Dorsolateral prefrontal cortex (tissue), 120 donors: ENCODE measurements at regions of chr3 and their contacts with region 1.

Region 1: DNA sequence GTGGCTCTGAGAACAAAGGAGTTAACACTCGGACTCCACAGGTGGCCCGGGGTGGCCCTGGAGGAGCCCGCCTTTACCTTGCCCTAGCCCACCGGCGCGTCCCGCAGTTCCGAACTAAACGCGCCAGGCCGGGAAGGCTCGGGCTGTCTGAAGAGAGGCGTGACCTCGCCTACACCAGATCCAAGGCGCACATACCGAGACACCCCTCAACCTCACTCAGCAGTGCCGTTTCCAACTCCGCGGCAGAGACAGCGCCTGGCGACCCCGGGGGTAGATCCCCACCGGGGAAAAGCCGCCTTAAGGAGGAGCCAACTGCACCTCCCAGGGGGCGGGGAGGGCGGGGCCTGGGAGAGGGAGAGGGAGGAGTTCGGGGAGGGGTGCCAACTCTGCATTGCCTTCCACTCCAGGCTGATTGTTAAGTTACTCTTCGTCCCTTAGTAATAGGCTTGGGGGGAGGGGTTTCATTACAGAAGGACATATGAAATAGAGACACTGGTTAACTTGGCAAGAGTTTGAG is at the start of gene DLG1:
- DNase-seq: peak in 9 of 10 donors; percentile 38 to 74 (median 60)
- H3K4me3 ChIP-seq: peak within 1 kb of the TSS; percentile 65 to 98 (median 93)
- H3K27ac ChIP-seq: peak within 1 kb of the TSS; percentile 65 to 99 (median 95)
- H3K27me3 ChIP-seq: no peaks in the 10 kb centered on the region
- CTCF ChIP-seq: peak in 1 of 56 donors; percentile 7
- total RNA-seq, gene DLG1: 124 to 310 (median 169) TPM

Region 2: GRCh38 chr3:196378146-196378841 is 920.1 kb before region 1 on chr3:
- intact Hi-C with region 1: no loop called
- DNase-seq: no peak
- H3K4me3 ChIP-seq: no peak overlapping the region
- H3K27ac ChIP-seq: no peak overlapping the region
- H3K27me3 ChIP-seq: no peaks in the 10 kb centered on the region
- CTCF ChIP-seq: no peak

Region 3: GRCh38 chr3:197256836-197257444 is 41.5 kb before region 1 on chr3:
- intact Hi-C with region 1: loop called in 1 of 2 experiments (anchors 5 kb)
- DNase-seq: peak in 2 of 10 donors; percentile 40 to 46
- H3K4me3 ChIP-seq: peak overlapping the region in 23 of 59 donors; percentile 8 to 54 (median 42)
- H3K27ac ChIP-seq: peak overlapping the region in 55 of 59 donors; percentile 1 to 79 (median 59)
- H3K27me3 ChIP-seq: no peaks in the 10 kb centered on the region
- CTCF ChIP-seq: peak; percentile 64 to 98 (median 82)

Region 4: DNA sequence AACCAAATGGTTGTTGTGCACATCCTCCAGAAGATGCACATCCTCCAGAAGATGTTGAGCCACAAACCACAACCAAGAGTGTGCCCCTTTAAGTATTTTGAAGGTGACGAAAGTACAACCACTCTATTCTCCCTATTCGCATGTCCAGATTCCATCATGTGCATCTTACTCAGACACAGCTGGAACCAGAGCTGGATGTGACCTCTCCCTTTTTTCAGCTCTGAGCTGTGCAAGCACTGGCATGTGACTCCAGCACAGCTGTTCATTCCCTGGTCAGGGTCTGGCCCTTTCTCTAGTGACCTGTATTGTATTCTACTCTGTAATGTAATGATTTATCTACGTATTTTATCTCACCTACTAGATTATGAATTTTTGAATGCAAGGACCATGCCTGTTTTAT is 29.3 kb after region 1 on chr3:
- intact Hi-C with region 1: loop called in 1 of 2 experiments (anchors 2 kb)
- DNase-seq: peak in 8 of 10 donors; percentile 53 to 79 (median 62)
- H3K4me3 ChIP-seq: peak overlapping the region in 1 of 59 donors; percentile 9
- H3K27ac ChIP-seq: peak overlapping the region; percentile 40 to 99 (median 94)
- H3K27me3 ChIP-seq: no peaks in the 10 kb centered on the region
- CTCF ChIP-seq: peak in 1 of 56 donors; percentile 9

Region 5: GRCh38 chr3:197372047-197372666 is 73.8 kb after region 1 on chr3:
- intact Hi-C with region 1: loop called (anchors 5 to 10 kb)
- DNase-seq: peak in 2 of 10 donors; percentile 23 to 25
- H3K4me3 ChIP-seq: no peak overlapping the region
- H3K27ac ChIP-seq: peak overlapping the region in 43 of 59 donors; percentile 3 to 99 (median 92)
- H3K27me3 ChIP-seq: no peaks in the 10 kb centered on the region
- CTCF ChIP-seq: no peak